Activated naive CD4-positive, alpha-beta T cell treated with anti-CD3 and anti-CD28 coated beads for 36 hours (primary cell): ENCODE measurements at regions of chr6 and their contacts with region 1.

Region 1: DNA sequence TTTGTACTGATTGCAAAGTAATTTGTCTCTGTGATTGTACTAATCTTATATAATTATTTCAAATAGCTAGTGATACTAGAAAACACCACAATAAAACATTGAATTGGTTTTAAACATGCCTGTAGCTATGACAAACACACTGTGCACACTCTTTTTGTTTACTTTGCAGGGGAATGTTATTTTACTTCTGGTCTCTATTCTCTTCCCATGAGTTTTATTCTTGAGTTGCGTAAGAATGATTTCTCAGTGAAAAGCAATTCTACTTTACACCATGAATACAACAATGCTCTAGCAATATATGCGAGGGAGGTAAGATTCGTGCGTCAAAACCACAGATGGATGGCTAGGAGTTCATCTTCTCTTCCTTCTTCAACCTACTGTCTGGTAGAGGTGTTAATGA is 68.4 kb upstream of the PHACTR1 start:
- DNase-seq: no peak
- H3K4me3 Mint-ChIP-seq: no peak overlapping the region
- H3K27ac Mint-ChIP-seq: no peak overlapping the region
- H3K4me1 Mint-ChIP-seq: no peaks in the 10 kb centered on the region
- H3K27me3 Mint-ChIP-seq: peaks cover 3% of the 10 kb centered on the region

Region 2: DNA sequence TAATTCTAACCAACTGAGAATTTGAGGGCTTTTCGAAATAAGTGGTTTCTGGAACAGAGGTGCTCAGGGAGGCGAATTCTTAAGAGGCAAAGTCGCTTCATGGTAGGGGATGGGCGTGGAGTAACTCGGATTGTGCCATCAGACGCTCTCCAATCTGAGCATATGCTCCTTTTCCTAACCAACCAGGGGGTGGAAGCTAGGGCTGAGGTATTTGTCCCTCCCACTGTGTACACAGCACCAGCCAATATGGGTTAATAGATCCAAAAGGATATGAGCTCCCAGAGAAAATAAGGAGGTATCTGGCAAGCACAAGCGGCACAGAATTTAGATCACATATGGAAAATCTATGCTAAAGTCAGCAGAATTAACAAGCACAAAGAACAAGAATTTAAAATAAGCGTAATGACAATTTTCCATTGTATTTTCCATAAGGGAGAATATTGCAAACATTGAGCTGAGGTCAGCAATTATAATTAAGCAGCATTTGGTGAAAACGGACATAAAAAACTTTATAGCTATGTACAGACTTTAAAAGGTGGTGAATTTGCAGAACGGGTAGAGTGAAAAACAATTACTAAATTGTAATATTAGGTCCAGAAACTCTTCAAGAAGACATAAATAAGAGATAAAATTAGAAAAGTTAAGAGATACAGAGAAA is 13.4 kb after region 1 on chr6:
- CTCF ChIA-PET with region 1: no interaction called
- intact Hi-C with region 1: no loop called
- DNase-seq: no peak
- H3K4me3 Mint-ChIP-seq: no peak overlapping the region
- H3K27ac Mint-ChIP-seq: no peak overlapping the region
- H3K4me1 Mint-ChIP-seq: no peaks in the 10 kb centered on the region
- H3K27me3 Mint-ChIP-seq: peaks cover 3% of the 10 kb centered on the region

Region 3: DNA sequence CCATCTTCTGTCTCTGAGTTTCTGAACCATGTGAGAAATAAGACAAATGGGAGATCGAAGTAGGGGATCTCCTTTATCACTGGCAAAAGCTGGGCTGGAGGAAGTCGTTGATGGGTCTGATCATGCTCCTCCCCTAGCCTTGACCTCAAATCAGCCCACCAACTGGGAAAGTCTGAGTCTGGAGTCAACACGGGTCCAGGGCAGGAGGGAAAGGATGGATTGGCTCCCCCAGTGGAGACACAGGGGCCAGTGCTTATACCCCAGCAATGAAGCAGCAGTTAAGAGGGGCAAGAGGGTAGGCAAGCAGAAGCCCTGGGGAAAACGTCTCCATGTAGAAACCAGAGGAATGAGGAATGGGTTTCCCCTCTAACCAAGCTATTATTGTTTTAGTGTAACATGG is 527.6 kb after region 1 on chr6:
- CTCF ChIA-PET with region 1: interaction called, 10 read pairs
- intact Hi-C with region 1: no loop called
- DNase-seq: no peak
- H3K4me3 Mint-ChIP-seq: no peak overlapping the region
- H3K27ac Mint-ChIP-seq: no peak overlapping the region
- H3K4me1 Mint-ChIP-seq: peaks cover 3% of the 10 kb centered on the region
- H3K27me3 Mint-ChIP-seq: peaks cover 7% of the 10 kb centered on the region